Heart left ventricle (tissue), 16 donors: ENCODE measurements at regions of chr10 and their contacts with region 1.

Region 1: DNA sequence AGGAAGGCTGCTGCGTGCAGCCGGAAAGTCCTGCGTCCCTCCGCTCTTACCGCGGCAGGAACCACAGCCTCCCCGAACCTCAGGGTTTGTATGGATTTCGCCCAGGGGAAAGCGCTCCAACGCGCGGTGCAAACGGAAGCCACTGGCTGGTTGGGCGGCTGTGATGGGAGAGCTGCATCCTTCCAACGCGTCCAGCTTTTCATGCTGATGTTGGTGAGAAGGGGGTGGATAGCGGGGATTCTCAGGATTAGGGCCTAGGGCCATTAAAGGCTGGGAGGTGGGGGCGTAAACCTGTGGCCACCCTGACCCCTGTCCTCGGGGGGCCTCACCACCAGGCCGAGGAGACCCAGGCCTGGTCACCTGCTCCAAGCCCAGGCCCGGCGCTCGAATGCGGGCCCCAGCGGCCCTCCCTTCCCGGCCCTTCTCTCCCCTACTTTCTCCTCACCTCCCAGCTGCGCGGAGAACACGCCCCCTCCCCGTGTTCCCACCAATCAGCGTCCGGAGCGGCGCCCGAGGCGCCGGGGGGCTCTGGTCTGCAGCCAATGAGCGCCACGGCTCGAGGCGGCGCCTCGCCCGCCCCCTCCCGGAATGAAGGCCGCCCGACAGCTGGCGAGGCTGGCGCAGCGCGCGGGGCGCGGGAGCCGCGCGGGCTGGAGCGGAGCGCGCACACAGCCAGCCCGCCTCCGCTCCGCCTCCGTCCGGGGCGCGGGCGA is 458 bp upstream of the NANOS1 start:
- DNase-seq: peak; percentile 89 to 95 (median 92)
- ATAC-seq: peak; percentile 59 to 81 (median 78)
- H3K4me3 ChIP-seq: peak overlapping the region in 11 of 12 donors; percentile 14 to 86 (median 63)
- H3K27ac ChIP-seq: peak overlapping the region in 11 of 12 donors; percentile 27 to 88 (median 77)
- H3K4me1 ChIP-seq: peaks cover 0 to 53% (median 23%) of the 10 kb centered on the region in 12 donors
- H3K27me3 ChIP-seq: peaks cover 0 to 5% (median 0%) of the 10 kb centered on the region in 9 donors
- CTCF ChIP-seq: peak in 10 of 12 donors; percentile 13 to 54 (median 28)
- POLR2A ChIP-seq: peak in 1 of 2 donors; percentile 32

Region 2: DNA sequence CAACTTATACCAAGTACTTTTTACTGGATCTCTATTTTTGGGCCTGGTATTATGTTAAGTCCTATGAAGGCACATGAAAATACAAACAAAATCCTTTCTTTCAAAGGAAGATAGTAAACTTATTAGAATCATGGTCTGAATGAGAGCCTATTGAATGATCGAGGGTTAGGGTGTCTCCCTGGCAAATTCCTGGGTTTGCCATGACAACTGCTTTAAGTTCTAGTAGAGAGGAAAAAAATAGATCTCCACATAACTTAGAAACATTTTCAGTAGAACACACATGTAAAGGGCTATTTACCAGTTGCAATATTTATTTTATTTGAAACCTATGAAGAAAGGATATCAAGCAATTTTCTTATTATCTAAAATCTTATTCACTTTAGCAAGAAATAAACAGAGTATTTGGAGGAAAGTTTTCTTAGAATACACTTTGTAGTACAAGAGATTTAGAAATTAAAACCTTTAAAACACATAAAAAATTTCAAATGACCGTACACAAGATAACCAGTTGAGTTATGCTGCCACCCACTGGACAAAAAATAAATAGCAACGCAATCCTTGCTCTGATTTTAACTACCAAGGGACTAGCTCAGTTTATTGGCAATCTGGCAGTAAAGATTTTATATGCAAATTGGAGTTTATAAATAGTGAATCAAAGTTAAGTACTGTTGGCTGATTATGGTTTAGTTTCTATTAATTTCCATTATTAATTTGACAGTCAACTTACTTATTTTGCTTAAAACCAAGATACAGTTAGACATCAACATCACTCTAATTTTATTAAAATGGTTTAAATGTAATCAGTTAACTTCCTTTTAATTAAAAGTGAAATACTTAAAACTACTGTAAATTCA is 308.1 kb before region 1 on chr10:
- intact Hi-C with region 1: loop called in 1 of 10 experiments (anchors 10 kb)
- DNase-seq: peak in 2 of 5 donors; percentile 28 to 36
- ATAC-seq: no peak
- H3K4me3 ChIP-seq: no peak overlapping the region
- H3K27ac ChIP-seq: no peak overlapping the region
- H3K4me1 ChIP-seq: peaks cover 0 to 29% (median 13%) of the 10 kb centered on the region in 12 donors
- H3K27me3 ChIP-seq: no peaks in the 10 kb centered on the region
- CTCF ChIP-seq: peak; percentile 72 to 91 (median 86)
- POLR2A ChIP-seq: no peak

Region 3: DNA sequence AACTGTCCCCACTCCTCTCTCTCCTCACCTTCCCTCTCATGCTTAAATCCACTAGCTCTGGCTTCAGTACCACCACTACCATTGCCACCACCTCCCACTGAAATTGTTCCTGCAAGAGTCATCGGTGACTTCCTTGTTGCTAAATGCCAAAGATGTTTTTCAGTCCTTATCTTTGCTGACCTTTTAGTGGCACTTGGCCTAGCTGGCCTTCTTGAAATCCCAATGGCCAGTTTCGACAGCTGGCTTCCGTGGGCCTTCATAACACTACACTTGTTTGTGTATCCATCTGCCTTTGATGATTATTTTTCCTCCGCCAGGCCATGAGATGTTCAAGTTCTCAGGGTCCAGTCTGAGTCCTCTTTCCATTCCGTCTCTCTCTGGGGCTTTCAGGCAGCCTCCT is 117.7 kb before region 1 on chr10:
- intact Hi-C with region 1: loop called in 1 of 10 experiments (anchors 10 kb)
- DNase-seq: peak in 1 of 5 donors; percentile 43
- ATAC-seq: peak in 2 of 4 donors; percentile 16 to 52
- H3K4me3 ChIP-seq: no peak overlapping the region
- H3K27ac ChIP-seq: peak overlapping the region in 1 of 12 donors; percentile 50
- H3K4me1 ChIP-seq: peaks cover 0 to 23% (median 8%) of the 10 kb centered on the region in 12 donors
- H3K27me3 ChIP-seq: no peaks in the 10 kb centered on the region
- CTCF ChIP-seq: no peak
- POLR2A ChIP-seq: no peak

Region 4: DNA sequence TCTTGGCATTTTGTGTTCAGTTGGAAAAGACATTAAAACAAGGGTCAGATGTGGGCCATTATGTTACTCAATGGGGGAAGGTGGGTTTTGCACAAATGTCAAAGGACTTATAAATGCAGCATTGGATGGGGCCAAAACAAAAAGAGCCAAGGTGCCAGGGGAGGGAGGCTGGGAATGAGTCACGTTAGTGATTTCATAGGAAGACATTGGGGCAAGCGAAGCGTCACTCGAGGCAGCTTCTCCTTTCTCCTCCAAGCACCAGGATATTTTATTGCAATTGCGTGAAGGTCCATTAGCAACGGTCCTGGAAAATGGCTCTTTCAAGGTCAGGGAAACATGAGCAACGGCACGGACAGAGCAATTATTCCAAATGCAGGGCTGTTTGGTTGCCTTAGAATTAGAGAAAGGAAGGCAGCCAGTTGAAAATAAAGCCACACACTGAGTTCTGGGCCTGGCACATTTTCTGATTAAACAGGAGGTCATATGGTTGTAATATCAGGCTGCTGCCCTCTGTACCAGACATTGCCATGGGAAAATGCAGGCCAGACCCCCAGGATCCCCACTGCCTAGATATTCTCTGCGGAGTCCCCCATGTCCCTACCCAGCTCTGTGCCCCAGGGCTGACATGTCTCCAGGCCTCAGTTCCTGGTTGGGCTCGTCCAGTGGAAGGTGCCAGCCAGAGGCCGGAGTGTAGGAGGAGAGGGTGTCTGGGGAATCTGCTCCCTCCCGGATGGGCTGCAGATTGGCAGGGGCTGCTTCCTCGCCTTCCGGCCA is 62.8 kb before region 1 on chr10:
- intact Hi-C with region 1: loop called in 4 of 10 experiments (anchors 5 kb)
- DNase-seq: peak in 4 of 5 donors; percentile 35 to 58 (median 44)
- ATAC-seq: peak; percentile 61 to 78 (median 70)
- H3K4me3 ChIP-seq: no peak overlapping the region
- H3K27ac ChIP-seq: peak overlapping the region in 8 of 12 donors; percentile 31 to 71 (median 58)
- H3K4me1 ChIP-seq: peaks cover 0 to 26% (median 0%) of the 10 kb centered on the region in 12 donors
- H3K27me3 ChIP-seq: no peaks in the 10 kb centered on the region
- CTCF ChIP-seq: no peak
- POLR2A ChIP-seq: no peak